Activated CD4-positive, alpha-beta T cell treated with anti-CD3 and anti-CD28 coated beads, Interleukin-2, amount 10 ng/mL, durations not matched to agents 24 days and 14 days (primary cell): ENCODE measurements at regions of chr5 and their contacts with region 1.

Region 1: GRCh38 chr5:75717082-75717922 is at the start of gene POC5:
- DNase-seq: peak; percentile 99
- H3K4me3 Mint-ChIP-seq: peak within 1 kb of the TSS; percentile 100
- H3K27ac Mint-ChIP-seq: peak within 1 kb of the TSS; percentile 100
- H3K4me1 Mint-ChIP-seq: peaks cover 29% of the 10 kb centered on the region
- H3K27me3 Mint-ChIP-seq: peaks cover 7% of the 10 kb centered on the region
- total RNA-seq, gene POC5: 20.8 and 21.3 TPM in 2 replicates

Region 2: GRCh38 chr5:75236322-75237316 is 480.7 kb before region 1 on chr5 and contains the start of gene ANKRD31:
- intact Hi-C with region 1: loop called (anchors 1 kb)
- DNase-seq: peak; percentile 97
- H3K4me3 Mint-ChIP-seq: peak within 1 kb of the TSS; percentile 96
- H3K27ac Mint-ChIP-seq: peak within 1 kb of the TSS; percentile 93
- H3K4me1 Mint-ChIP-seq: peaks cover 13% of the 10 kb centered on the region
- H3K27me3 Mint-ChIP-seq: no peaks in the 10 kb centered on the region
- total RNA-seq, gene ANKRD31: 0.33 and 0.47 TPM in 2 replicates

Region 3: GRCh38 chr5:75678155-75678554 is 39.1 kb before region 1 on chr5:
- intact Hi-C with region 1: no loop called
- DNase-seq: peak; percentile 55
- H3K4me3 Mint-ChIP-seq: no peak overlapping the region
- H3K27ac Mint-ChIP-seq: peak overlapping the region; percentile 69
- H3K4me1 Mint-ChIP-seq: peaks cover 8% of the 10 kb centered on the region
- H3K27me3 Mint-ChIP-seq: no peaks in the 10 kb centered on the region

Region 4: GRCh38 chr5:76041863-76042262 is 324.6 kb after region 1 on chr5:
- intact Hi-C with region 1: no loop called
- DNase-seq: peak; percentile 60
- H3K4me3 Mint-ChIP-seq: no peak overlapping the region
- H3K27ac Mint-ChIP-seq: no peak overlapping the region
- H3K4me1 Mint-ChIP-seq: peaks cover 8% of the 10 kb centered on the region
- H3K27me3 Mint-ChIP-seq: peaks cover 24% of the 10 kb centered on the region

Region 5: DNA sequence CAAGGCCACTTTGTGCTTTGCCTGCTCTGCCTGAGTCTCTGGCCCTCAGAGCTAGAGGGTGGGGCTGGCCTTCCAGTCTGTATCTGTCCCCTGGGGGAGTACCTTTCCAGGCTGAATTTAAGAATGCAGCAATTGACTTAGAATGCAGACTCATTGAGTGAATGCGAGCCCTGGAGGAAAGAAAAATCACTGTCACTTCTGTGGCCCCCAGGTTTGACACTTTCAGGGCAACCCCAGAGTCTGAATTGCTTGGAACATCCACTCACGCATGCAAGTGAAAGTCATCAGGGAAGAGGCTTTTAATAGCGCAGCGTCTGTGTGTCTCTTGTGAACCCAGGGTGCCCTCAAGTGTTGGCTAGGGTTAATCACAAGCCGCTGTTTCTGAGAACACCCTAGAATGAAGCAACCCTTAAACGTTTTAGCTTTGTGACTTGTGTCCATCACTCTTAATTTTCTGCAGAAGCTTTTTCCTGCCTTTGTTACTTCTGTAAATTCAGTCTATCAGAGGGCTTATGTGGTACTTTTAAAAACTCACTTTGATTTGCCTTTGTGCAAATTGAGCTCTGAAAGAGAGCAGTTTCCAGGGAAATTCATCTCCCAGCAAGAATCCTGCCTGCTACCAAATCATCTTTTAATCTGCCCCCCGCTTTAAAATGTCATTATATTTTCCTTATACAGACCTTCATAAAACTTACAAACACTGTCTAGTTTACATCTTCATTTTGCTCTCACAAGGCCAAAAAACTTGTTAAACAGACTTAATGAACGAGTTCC is 539.0 kb after region 1 on chr5:
- intact Hi-C with region 1: loop called (anchors 5 kb)
- DNase-seq: peak; percentile 89
- H3K4me3 Mint-ChIP-seq: no peak overlapping the region
- H3K27ac Mint-ChIP-seq: no peak overlapping the region
- H3K4me1 Mint-ChIP-seq: peaks cover 9% of the 10 kb centered on the region
- H3K27me3 Mint-ChIP-seq: peaks cover 34% of the 10 kb centered on the region